Calu3 (cell line): ENCODE measurements at regions of chr2 and their contacts with region 1.

Region 1: DNA sequence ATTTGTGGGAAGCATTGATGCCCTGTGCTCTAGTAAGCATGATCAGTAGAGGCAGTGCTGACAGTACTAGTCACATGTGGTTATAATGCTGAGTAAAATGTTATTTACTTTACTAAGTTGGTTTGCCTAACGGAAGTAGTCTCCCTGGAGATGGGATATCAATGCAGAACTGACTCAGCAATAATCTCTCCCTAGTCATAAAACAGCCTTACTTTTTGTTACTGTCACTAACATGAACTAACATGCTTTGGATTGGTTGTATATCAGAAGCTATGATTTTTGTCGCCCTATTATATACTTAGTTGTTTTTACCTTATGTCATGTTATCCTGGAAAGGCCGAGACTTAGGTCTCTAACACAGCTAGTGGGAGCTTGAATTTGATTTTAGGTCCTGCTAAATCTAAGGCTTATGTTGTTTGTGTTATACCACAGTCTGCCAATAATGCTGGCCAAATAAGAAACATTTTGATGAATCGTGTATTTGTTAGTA is 166.5 kb downstream of the MCFD2 start:
- DNase-seq: no peak
- H3K4me3 Mint-ChIP-seq: no peak overlapping the region
- H3K27ac Mint-ChIP-seq: peak overlapping the region; percentile 56
- H3K4me1 Mint-ChIP-seq: peaks cover 48% of the 10 kb centered on the region
- H3K27me3 Mint-ChIP-seq: no peaks in the 10 kb centered on the region
- CTCF ChIP-seq: no peak

Region 2: GRCh38 chr2:46706264-46706983 is 42.7 kb before region 1 on chr2:
- CTCF ChIA-PET with region 1: no interaction called
- intact Hi-C with region 1: loop called (anchors 5 kb)
- DNase-seq: no peak
- H3K4me3 Mint-ChIP-seq: no peak overlapping the region
- H3K27ac Mint-ChIP-seq: no peak overlapping the region
- H3K4me1 Mint-ChIP-seq: peaks cover 23% of the 10 kb centered on the region
- H3K27me3 Mint-ChIP-seq: no peaks in the 10 kb centered on the region
- CTCF ChIP-seq: no peak